PC-9 (cell line): ENCODE measurements at regions of chr2 and their contacts with region 1.

Region 1: DNA sequence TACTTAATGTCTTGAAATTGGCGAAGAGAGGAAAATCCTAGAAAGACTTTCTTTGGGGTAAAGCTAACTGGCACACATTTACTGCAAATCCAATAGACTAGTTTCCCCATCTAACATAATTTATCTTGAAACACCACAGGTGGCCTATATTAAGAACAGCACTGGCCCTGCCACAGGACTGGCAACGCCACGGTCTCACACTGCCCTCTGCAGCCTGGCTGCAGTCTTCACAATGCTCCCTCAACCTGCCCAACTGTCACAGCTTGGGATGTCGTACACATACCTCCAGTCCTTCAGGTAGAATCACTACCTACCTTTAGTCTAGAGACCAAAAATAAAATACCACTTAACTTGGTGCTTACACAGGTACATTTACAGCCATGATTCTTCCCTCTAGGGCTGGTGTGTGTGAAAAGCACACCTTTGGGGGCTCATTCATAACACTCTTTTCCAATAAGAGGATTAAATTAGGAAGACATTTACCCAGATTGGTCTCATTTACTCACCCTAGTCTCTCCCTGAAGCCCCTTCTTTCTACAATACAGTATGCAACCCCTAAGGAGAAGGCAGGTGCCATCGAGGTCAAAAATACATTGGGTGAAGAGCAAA is 222.2 kb downstream of the C1D start:
- DNase-seq: peak in 1 of 2 experiments; percentile 65
- H3K4me3 ChIP-seq: no peak overlapping the region
- H3K27ac ChIP-seq: no peak overlapping the region
- H3K4me1 ChIP-seq: no peaks in the 10 kb centered on the region
- H3K27me3 ChIP-seq: 0 out of 2 replicates have a peak, but pooled peaks cover 4% of the 10 kb centered on the region
- CTCF ChIP-seq: peak; percentile 75

Region 2: DNA sequence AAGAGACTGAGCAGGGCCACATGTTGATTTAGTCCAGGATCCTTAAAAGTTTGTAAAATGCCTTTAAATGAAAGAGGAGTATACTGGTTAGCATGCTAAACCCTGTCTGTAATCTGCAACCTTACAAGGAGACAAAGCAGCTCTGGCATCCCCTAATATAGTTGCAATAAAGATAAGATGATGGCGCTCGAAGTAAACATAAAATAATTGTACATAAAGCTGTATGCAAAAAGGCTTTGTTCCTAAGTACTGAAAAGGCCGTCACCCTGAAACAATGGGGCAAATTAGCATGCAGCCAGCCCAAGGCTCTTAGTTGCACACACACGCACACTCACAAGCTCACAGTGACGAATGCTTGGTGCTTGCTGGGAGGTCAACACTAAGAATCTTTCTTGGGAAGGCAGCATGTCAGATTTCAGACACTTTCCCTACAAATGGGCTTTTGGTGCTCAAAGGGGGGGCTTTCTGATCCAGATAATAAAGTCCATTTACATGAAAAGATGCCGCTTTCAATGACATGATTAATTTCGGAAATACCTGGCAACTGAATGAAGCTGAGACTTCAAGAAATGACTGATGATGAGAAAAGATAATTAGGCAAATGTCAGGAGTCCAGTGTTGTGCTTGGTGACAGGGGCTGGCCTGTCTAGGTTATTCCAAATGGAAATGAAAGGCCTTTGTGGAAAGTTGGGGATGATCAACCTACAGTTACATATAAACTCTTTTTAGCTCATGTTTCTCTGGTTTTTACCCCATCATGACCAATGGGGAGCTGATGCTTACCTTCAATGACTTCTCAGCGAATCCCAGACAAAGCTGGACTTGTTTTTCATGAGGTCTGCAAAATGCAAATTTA is 1035.3 kb before region 1 on chr2:
- CTCF ChIA-PET with region 1: interaction called, 27 read pairs
- POLR2A ChIA-PET with region 1: no interaction called
- intact Hi-C with region 1: no loop called
- DNase-seq: no peak
- H3K4me3 ChIP-seq: no peak overlapping the region
- H3K27ac ChIP-seq: no peak overlapping the region
- H3K4me1 ChIP-seq: no peaks in the 10 kb centered on the region
- H3K27me3 ChIP-seq: no peaks in the 10 kb centered on the region
- CTCF ChIP-seq: no peak

Region 3: DNA sequence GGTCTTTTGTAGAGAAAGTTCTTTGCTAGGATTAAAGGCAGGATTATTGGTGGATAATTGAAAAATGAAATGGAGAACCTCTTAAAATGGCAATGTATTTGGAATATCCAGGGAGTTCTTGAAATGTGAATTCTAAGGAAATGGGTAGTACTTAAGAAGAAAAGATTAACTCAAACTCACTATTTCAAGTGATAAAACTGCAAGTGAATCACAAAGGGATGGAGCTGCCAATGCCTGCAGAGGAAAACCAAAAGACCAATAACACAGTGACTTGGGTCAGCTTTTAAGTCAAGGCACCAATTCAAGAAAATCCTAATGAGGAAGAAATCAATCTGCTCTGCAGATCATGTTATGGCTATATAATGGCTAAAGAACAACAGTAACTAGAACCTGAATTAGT is 511.1 kb before region 1 on chr2:
- CTCF ChIA-PET with region 1: no interaction called
- POLR2A ChIA-PET with region 1: no interaction called
- intact Hi-C with region 1: no loop called
- DNase-seq: no peak
- H3K4me3 ChIP-seq: no peak overlapping the region
- H3K27ac ChIP-seq: no peak overlapping the region
- H3K4me1 ChIP-seq: no peaks in the 10 kb centered on the region
- H3K27me3 ChIP-seq: no peaks in the 10 kb centered on the region
- CTCF ChIP-seq: no peak